ENCODE measurements at regions of chr10 and their contacts with region 1.

Region 1: GRCh38 chr10:6647811-6648526 is 67.9 kb upstream of the PRKCQ start:
- DNase-seq: peak; percentile 7 to 75 (median 58)
- H3K4me3 ChIP-seq: peak overlapping the region in 3 of 59 donors; percentile 13 to 44 (median 33)
- H3K27ac ChIP-seq: peak overlapping the region in 19 of 59 donors; percentile 15 to 71 (median 53)
- H3K27me3 ChIP-seq: peaks cover 0 to 11% (median 0%) of the 10 kb centered on the region in 45 donors
- CTCF ChIP-seq: peak; percentile 35 to 92 (median 77)

Region 2: GRCh38 chr10:6514844-6515780 is 132.9 kb before region 1 on chr10:
- intact Hi-C with region 1: loop called in 1 of 2 experiments (anchors 10 kb)
- DNase-seq: no peak
- H3K4me3 ChIP-seq: no peak overlapping the region
- H3K27ac ChIP-seq: peak overlapping the region in 1 of 59 donors; percentile 2
- H3K27me3 ChIP-seq: no peaks in the 10 kb centered on the region
- CTCF ChIP-seq: no peak

Region 3: GRCh38 chr10:6607778-6608177 is 40.2 kb before region 1 on chr10:
- intact Hi-C with region 1: loop called (anchors 5 kb)
- DNase-seq: peak in 9 of 10 donors; percentile 5 to 78 (median 62)
- H3K4me3 ChIP-seq: peak overlapping the region in 3 of 59 donors; percentile 6 to 17 (median 9)
- H3K27ac ChIP-seq: peak overlapping the region in 58 of 59 donors; percentile 56 to 97 (median 89)
- H3K27me3 ChIP-seq: peaks cover 0 to 11% (median 0%) of the 10 kb centered on the region in 45 donors
- CTCF ChIP-seq: peak in 1 of 56 donors; percentile 22